Activated B cell treated with CpG ODN at 0.5 μM for 24 hours (primary cell): ENCODE measurements at regions of chr6 and their contacts with region 1.

Region 1: GRCh38 chr6:34425498-34426410 is at the start of gene RPS10:
- DNase-seq: peak; percentile 97
- ATAC-seq: peak; percentile 99
- H3K4me3 Mint-ChIP-seq: peak within 1 kb of the TSS; percentile 97
- H3K27ac Mint-ChIP-seq: peak within 1 kb of the TSS; percentile 97
- H3K4me1 Mint-ChIP-seq: peaks cover 29% of the 10 kb centered on the region
- H3K27me3 Mint-ChIP-seq: no peaks in the 10 kb centered on the region
- CTCF ChIP-seq: no peak
- total RNA-seq, gene RPS10: 2,903 and 3,402 TPM in 2 replicates

Region 2: GRCh38 chr6:34324738-34325444 is 100.9 kb before region 1 on chr6:
- CTCF ChIA-PET with region 1: no interaction called
- POLR2A ChIA-PET with region 1: no interaction called
- intact Hi-C with region 1: no loop called
- DNase-seq: no peak
- ATAC-seq: no peak
- H3K4me3 Mint-ChIP-seq: no peak overlapping the region
- H3K27ac Mint-ChIP-seq: no peak overlapping the region
- H3K4me1 Mint-ChIP-seq: peaks cover 10% of the 10 kb centered on the region
- H3K27me3 Mint-ChIP-seq: no peaks in the 10 kb centered on the region
- CTCF ChIP-seq: no peak

Region 3: GRCh38 chr6:34414999-34415858 is 10.5 kb before region 1 on chr6:
- CTCF ChIA-PET with region 1: interaction called, 6 read pairs
- POLR2A ChIA-PET with region 1: interaction called, 10 read pairs
- intact Hi-C with region 1: loop called (anchors 1 kb)
- DNase-seq: no peak
- ATAC-seq: peak; percentile 83
- H3K4me3 Mint-ChIP-seq: no peak overlapping the region
- H3K27ac Mint-ChIP-seq: no peak overlapping the region
- H3K4me1 Mint-ChIP-seq: peaks cover 6% of the 10 kb centered on the region
- H3K27me3 Mint-ChIP-seq: no peaks in the 10 kb centered on the region
- CTCF ChIP-seq: no peak

Region 4: DNA sequence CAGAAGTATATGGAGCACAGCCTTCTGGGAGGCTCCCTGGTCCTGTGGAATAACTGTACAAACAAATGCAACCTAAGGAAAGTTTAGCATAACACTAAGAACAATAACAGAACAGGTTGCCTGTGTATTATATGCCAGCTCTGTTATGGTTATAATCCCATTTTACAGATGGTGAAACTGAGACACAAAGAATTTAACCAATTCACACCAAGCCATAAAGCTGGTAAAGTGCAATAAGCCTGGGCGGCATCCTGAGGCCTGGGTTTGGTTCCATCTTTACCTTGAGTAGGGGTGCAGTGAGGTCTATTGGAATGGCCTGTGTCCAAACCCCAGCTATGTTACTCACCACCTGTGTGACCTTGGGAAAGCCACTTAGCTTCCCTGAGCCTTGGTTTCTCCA is 25.4 kb after region 1 on chr6:
- CTCF ChIA-PET with region 1: no interaction called
- POLR2A ChIA-PET with region 1: no interaction called
- intact Hi-C with region 1: no loop called
- DNase-seq: no peak
- ATAC-seq: no peak
- H3K4me3 Mint-ChIP-seq: no peak overlapping the region
- H3K27ac Mint-ChIP-seq: no peak overlapping the region
- H3K4me1 Mint-ChIP-seq: no peaks in the 10 kb centered on the region
- H3K27me3 Mint-ChIP-seq: no peaks in the 10 kb centered on the region
- CTCF ChIP-seq: no peak

Region 5: DNA sequence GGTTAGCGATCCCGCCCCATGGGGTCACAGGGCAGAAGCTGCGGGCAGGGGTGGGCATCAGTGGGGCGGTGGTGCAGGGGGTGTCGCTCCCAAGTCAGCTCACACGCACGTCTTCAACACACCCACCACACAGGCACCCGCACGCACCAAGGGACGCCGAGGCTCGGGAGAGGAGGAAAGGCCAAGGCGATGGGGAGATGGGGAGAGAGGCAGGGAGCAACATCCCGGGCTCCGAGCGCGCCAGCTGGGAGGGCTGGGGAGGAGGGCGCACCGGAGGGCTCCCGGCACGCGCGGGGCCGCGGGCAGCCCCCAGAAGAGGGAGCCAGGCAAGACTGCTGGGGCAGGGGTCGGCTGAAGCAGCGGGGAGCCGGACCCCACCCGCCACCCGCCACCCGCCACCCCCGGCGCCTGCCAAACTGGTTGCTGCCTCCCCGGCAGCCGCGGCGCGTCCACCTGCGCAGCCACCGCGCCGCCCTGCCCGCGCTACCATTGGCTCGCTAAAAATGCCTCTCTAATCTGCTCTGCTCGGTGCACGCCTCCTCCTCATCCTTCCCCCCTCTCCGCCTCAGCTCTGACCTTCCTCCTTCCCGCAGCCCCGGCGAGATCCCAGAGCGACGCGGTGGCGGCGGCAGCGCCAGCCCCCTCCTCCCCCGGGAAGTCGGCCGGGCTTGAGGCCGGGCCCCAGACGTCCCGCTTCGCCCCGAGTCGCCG is 39.9 kb after region 1 on chr6 and contains the start of gene PACSIN1:
- CTCF ChIA-PET with region 1: no interaction called
- POLR2A ChIA-PET with region 1: no interaction called
- intact Hi-C with region 1: loop called (anchors 5 kb)
- DNase-seq: no peak
- ATAC-seq: peak; percentile 52
- H3K4me3 Mint-ChIP-seq: peak within 1 kb of the TSS; percentile 76
- H3K27ac Mint-ChIP-seq: no peak within 1 kb of the TSS
- H3K4me1 Mint-ChIP-seq: peaks cover 29% of the 10 kb centered on the region
- H3K27me3 Mint-ChIP-seq: peaks cover 17% of the 10 kb centered on the region
- CTCF ChIP-seq: no peak
- total RNA-seq, gene PACSIN1: 0.11 and 0.20 TPM in 2 replicates